PC-3 (cell line): ENCODE measurements at regions of chr1 and their contacts with region 1.

Region 1: DNA sequence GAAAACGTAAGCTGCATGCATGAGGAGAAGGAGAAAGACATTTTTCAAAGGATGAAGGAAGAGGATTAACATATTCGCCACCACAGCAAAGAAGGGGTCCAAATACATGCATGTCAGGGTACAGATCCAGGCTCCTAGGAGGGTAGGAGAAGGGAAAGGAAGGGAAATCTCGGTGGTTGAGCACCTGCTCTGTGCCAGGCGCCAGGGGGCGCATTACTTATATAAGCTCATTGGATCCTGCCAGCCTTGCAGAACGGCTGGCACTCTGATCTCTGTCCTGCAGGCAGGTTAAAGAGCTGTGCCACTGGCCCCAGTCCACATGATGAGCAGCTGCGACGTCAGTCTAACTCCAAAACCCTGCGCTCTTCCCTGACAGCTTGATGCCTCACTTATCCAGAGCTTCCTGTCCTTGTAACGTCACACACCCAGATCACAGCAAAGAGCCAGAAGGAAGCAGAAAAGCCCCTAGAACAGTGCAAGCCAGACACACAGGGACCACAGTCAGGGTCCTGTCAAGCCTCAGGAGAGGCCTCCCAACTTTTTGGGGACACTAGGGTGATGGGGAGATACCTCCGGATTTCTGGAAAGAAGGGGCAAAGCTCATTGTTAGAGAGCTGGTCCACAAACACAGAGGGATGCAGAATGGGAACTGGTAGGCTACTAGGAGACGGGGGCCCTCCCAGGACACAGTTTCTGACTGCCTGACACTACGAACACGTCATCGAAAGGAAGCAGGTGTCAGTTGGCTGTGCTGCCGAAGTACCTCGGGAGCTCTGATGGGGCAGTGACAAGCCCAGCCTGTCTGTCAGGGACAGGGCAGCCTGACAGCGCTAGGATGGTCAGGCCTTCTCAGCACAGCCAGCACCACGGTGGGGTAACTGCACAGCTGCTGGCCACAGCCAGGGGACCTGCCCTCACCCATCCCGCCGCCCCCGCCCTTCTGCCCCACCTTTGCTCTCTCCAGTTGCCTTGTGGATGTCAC is 99.1 kb downstream of the BEND5 start:
- DNase-seq: peak; percentile 73
- ATAC-seq: peak; percentile 78
- H3K4me3 ChIP-seq: no peak overlapping the region
- H3K27ac ChIP-seq: no peak overlapping the region
- H3K4me1 ChIP-seq: peaks cover 10% of the 10 kb centered on the region
- H3K27me3 ChIP-seq: no peaks in the 10 kb centered on the region
- CTCF ChIP-seq: peak; percentile 82

Region 2: DNA sequence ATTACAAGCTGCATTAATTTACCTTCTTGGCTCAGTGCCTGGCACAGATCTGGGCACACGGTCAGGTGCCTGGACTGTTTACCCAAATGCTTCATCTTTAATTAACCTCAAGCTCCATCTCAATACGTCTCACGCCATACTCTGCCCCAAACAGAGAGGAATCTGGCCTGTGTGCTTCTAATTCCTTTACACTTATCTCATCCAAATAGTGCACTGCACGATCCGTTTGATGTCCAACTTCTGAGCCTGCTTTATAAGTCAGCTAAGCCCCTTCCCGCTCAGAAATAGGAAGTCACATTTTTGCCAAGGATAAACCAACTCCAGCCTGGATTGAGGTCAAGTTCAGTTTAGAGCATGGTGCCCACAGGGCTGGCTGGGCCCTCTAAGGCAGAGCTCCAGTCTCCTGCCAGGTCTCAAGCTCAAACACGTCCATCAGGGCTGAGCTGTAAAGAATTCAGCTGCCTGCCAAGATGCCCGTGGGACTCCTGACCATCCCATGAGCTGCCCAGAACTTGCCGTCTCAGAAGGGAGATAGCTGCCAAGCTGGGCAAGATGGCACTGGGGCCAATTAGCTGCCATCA is 913.9 kb before region 1 on chr1:
- CTCF ChIA-PET with region 1: no interaction called
- POLR2A ChIA-PET with region 1: no interaction called
- intact Hi-C with region 1: no loop called
- DNase-seq: no peak
- ATAC-seq: no peak
- H3K4me3 ChIP-seq: no peak overlapping the region
- H3K27ac ChIP-seq: no peak overlapping the region
- H3K4me1 ChIP-seq: no peaks in the 10 kb centered on the region
- H3K27me3 ChIP-seq: no peaks in the 10 kb centered on the region
- CTCF ChIP-seq: no peak

Region 3: GRCh38 chr1:48552420-48552819 is 125.2 kb before region 1 on chr1:
- CTCF ChIA-PET with region 1: no interaction called
- POLR2A ChIA-PET with region 1: no interaction called
- intact Hi-C with region 1: loop called (anchors 2 kb)
- DNase-seq: peak; percentile 59
- ATAC-seq: peak; percentile 69
- H3K4me3 ChIP-seq: no peak overlapping the region
- H3K27ac ChIP-seq: no peak overlapping the region
- H3K4me1 ChIP-seq: no peaks in the 10 kb centered on the region
- H3K27me3 ChIP-seq: no peaks in the 10 kb centered on the region; the same call in 1 of the 2 replicates
- CTCF ChIP-seq: peak; percentile 68

Region 4: GRCh38 chr1:48644905-48645605 is 32.5 kb before region 1 on chr1:
- CTCF ChIA-PET with region 1: no interaction called
- POLR2A ChIA-PET with region 1: no interaction called
- intact Hi-C with region 1: no loop called
- DNase-seq: no peak
- ATAC-seq: no peak
- H3K4me3 ChIP-seq: no peak overlapping the region
- H3K27ac ChIP-seq: no peak overlapping the region
- H3K4me1 ChIP-seq: no peaks in the 10 kb centered on the region
- H3K27me3 ChIP-seq: peaks cover 92% of the 10 kb centered on the region
- CTCF ChIP-seq: no peak

Region 5: DNA sequence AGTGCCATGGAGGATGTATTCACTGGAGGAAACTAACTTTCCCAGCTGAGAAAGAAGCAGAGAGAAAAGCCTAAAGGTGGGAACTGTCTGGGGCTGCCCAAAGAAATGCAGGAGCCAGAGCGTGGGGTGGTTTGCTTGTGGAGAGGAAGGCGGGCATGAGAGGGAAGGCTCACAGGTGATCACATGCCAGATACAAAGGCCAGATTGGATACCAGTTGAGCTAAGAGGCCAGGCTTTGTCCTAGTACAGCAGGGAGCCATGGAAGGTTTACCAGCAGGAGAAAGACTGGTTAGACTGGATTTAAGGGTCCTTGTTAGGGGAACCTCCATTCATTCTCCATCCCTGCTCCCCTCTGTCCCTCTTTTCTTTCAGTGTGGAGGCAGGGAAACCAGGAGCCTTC is 32.7 kb after region 1 on chr1:
- CTCF ChIA-PET with region 1: no interaction called
- POLR2A ChIA-PET with region 1: no interaction called
- intact Hi-C with region 1: no loop called
- DNase-seq: no peak
- ATAC-seq: no peak
- H3K4me3 ChIP-seq: no peak overlapping the region
- H3K27ac ChIP-seq: no peak overlapping the region
- H3K4me1 ChIP-seq: no peaks in the 10 kb centered on the region
- H3K27me3 ChIP-seq: no peaks in the 10 kb centered on the region
- CTCF ChIP-seq: no peak

Region 6: DNA sequence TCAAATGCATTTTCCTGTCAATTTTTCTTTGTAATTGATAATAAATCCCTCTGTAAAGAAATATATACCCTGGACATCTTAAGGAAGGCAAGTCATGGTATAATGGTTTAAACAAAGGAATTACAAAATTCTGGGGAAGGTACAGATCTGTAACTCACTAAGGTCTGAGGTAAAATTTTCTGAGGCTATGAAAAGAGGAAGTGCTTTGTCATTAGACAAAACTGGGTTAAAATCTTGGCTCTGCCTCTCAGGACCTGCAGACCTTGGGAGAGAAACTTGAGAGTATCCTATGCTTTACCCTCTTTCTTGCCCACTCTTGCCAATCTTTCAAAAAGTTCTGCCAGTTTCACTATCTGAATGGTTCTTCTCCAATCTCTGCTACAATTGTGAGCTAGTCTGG is 125.9 kb after region 1 on chr1:
- CTCF ChIA-PET with region 1: no interaction called
- POLR2A ChIA-PET with region 1: no interaction called
- intact Hi-C with region 1: no loop called
- DNase-seq: no peak
- ATAC-seq: no peak
- H3K4me3 ChIP-seq: no peak overlapping the region
- H3K27ac ChIP-seq: no peak overlapping the region
- H3K4me1 ChIP-seq: no peaks in the 10 kb centered on the region
- H3K27me3 ChIP-seq: peaks cover 2% of the 10 kb centered on the region; the same call in 1 of the 2 replicates
- CTCF ChIP-seq: no peak

Region 7: GRCh38 chr1:48817505-48818114 is 140.0 kb after region 1 on chr1:
- CTCF ChIA-PET with region 1: interaction called, 47 read pairs
- POLR2A ChIA-PET with region 1: no interaction called
- intact Hi-C with region 1: loop called (anchors 2 kb)
- DNase-seq: peak; percentile 73
- ATAC-seq: peak; percentile 92
- H3K4me3 ChIP-seq: no peak overlapping the region
- H3K27ac ChIP-seq: no peak overlapping the region
- H3K4me1 ChIP-seq: no peaks in the 10 kb centered on the region
- H3K27me3 ChIP-seq: no peaks in the 10 kb centered on the region
- CTCF ChIP-seq: peak; percentile 91

Region 8: DNA sequence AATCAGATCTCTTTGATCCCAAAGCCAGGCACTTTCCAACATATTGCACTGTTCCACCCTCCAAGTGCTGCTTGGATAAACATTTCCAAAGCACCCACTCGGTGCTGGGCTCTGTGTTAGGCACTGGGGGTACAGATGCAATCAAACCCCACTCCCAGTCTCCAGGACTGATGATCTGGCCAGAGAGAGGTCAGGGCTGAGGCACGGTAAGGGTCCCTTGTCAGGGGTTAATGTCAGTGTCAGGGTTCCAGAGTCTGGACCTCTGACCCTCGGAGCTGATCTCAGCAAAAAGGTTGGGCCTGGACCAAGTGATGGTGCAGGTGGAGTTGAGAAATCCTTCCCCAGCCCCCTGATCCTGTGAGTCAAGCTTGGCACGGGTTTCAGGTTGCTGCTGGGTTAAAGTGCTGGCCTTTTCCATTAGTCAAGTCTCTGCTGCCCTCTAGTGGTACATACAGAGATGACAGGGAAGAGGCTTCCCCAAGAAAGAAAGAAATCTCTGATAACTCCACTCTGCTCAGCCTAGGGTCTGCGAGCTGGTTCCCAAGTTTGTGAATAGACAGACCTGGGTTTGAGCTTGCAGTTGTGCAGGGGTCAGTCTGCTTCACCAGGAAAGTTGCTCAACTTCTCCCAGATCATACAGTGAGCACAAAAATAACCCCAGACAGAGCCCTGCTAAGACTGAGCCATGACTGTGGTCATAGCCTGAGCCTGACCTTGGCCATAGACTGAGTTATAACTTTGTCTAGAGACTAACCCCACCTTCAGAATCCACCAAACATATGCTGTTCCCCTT is 1671.0 kb after region 1 on chr1:
- CTCF ChIA-PET with region 1: no interaction called
- POLR2A ChIA-PET with region 1: no interaction called
- intact Hi-C with region 1: loop called (anchors 5 kb)
- DNase-seq: peak; percentile 64
- ATAC-seq: peak; percentile 50
- H3K4me3 ChIP-seq: no peak overlapping the region
- H3K27ac ChIP-seq: no peak overlapping the region
- H3K4me1 ChIP-seq: no peaks in the 10 kb centered on the region
- H3K27me3 ChIP-seq: no peaks in the 10 kb centered on the region
- CTCF ChIP-seq: peak; percentile 61